Tibial artery (tissue), 4 donors: ENCODE measurements at regions of chr19 and their contacts with region 1.

Region 1: DNA sequence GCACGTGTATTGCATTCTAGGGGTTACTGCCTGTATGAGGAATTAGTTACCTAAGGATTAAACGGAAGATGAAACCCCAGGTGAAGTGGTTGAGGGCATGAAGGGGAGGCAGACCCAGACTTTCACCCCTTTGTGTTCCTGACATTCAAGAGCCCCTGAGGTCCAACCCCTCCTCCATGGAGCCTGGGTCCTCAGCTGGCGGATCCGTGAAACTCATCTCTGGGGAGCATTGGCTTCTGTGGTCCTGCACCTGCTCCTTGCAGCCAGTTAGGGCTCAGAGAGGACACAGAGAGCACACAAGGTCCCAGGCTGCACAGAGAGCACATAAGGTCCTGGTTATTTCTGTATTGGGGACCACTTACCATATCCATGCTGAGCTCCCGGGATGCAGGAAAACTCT is 7.0 kb upstream of the LILRA1 start:
- DNase-seq: no peak
- H3K4me3 ChIP-seq: no peak overlapping the region
- H3K27ac ChIP-seq: no peak overlapping the region
- H3K4me1 ChIP-seq: no peaks in the 10 kb centered on the region
- H3K27me3 ChIP-seq: no peaks in the 10 kb centered on the region
- CTCF ChIP-seq: no peak

Region 2: GRCh38 chr19:54281007-54281728 is 305.2 kb before region 1 on chr19 and contains the start of gene LILRB2:
- intact Hi-C with region 1: loop called (anchors 5 kb)
- DNase-seq: peak in 1 of 2 donors; percentile 31
- H3K4me3 ChIP-seq: no peak within 1 kb of the TSS
- H3K27ac ChIP-seq: no peak within 1 kb of the TSS
- H3K4me1 ChIP-seq: no peaks in the 10 kb centered on the region
- H3K27me3 ChIP-seq: peaks cover 0 to 27% of the 10 kb centered on the region in 2 donors
- CTCF ChIP-seq: no peak

Region 3: GRCh38 chr19:54312436-54313377 is 273.7 kb before region 1 on chr19 and contains the start of gene LILRA5:
- intact Hi-C with region 1: no loop called
- DNase-seq: peak in 1 of 2 donors; percentile 60
- H3K4me3 ChIP-seq: no peak within 1 kb of the TSS
- H3K27ac ChIP-seq: no peak within 1 kb of the TSS
- H3K4me1 ChIP-seq: no peaks in the 10 kb centered on the region
- H3K27me3 ChIP-seq: peaks cover 0 to 24% of the 10 kb centered on the region in 2 donors
- CTCF ChIP-seq: no peak

Region 4: GRCh38 chr19:54573330-54573872 is 13.0 kb before region 1 on chr19 and contains the start of gene LILRA2:
- intact Hi-C with region 1: no loop called
- DNase-seq: no peak
- H3K4me3 ChIP-seq: no peak within 1 kb of the TSS
- H3K27ac ChIP-seq: no peak within 1 kb of the TSS
- H3K4me1 ChIP-seq: no peaks in the 10 kb centered on the region
- H3K27me3 ChIP-seq: no peaks in the 10 kb centered on the region
- CTCF ChIP-seq: no peak

Region 5: GRCh38 chr19:54684527-54684926 is 98.1 kb after region 1 on chr19:
- intact Hi-C with region 1: no loop called
- DNase-seq: no peak
- H3K4me3 ChIP-seq: no peak overlapping the region
- H3K27ac ChIP-seq: no peak overlapping the region
- H3K4me1 ChIP-seq: no peaks in the 10 kb centered on the region
- H3K27me3 ChIP-seq: peaks cover 0 to 3% of the 10 kb centered on the region in 2 donors
- CTCF ChIP-seq: no peak